ENCODE measurements at regions of chr13 and their contacts with region 1.

Region 1: GRCh38 chr13:21638319-21639282 is 32.3 kb upstream of the FGF9 start:
- DNase-seq: peak; percentile 29
- H3K4me3 ChIP-seq: no peak overlapping the region
- H3K27ac ChIP-seq: no peak overlapping the region
- H3K4me1 ChIP-seq: no peaks in the 10 kb centered on the region
- H3K27me3 ChIP-seq: no peaks in the 10 kb centered on the region

Region 2: GRCh38 chr13:20969182-20969581 is 669.4 kb before region 1 on chr13:
- in situ Hi-C with region 1: no loop called
- DNase-seq: peak; percentile 82
- H3K4me3 ChIP-seq: no peak overlapping the region
- H3K27ac ChIP-seq: no peak overlapping the region
- H3K4me1 ChIP-seq: no peaks in the 10 kb centered on the region
- H3K27me3 ChIP-seq: no peaks in the 10 kb centered on the region

Region 3: GRCh38 chr13:22278336-22278929 is 639.8 kb after region 1 on chr13:
- in situ Hi-C with region 1: loop called (anchors 10 kb)
- DNase-seq: peak; percentile 58
- H3K4me3 ChIP-seq: no peak overlapping the region
- H3K27ac ChIP-seq: no peak overlapping the region
- H3K4me1 ChIP-seq: no peaks in the 10 kb centered on the region
- H3K27me3 ChIP-seq: no peaks in the 10 kb centered on the region

Region 4: DNA sequence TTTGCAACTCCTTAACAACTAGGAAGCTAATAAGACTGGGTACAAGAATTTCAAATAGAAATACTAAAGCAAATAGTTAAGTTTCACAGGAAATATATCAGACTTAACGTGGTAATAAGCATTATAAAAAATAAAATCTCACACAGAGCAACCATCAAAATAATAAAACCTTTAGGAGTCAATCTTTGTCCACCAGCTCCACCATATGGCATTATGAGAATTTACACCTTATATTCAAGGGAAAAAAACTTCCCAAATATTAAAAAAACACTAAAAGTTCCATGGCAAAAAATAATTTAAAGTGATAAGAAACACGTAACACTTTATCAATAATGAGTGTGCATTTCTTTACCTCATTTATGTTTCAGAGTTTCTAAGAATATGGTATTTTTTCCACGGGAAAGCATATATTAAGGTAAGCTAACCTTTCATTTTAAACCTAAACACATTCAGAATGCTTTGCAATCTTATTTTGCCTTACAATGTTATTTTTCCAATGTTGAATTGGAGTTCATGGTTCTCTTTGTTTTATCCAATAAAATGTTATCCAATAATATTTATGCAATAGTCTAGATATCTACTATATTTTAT is 1119.0 kb after region 1 on chr13:
- in situ Hi-C with region 1: loop called (anchors 25 kb)
- DNase-seq: peak; percentile 41
- H3K4me3 ChIP-seq: no peak overlapping the region
- H3K27ac ChIP-seq: no peak overlapping the region
- H3K4me1 ChIP-seq: no peaks in the 10 kb centered on the region
- H3K27me3 ChIP-seq: no peaks in the 10 kb centered on the region

Measured in GM23248 (cell line).